Activated B cell treated with CpG ODN at 0.5 μM for 24 hours (primary cell): ENCODE measurements at regions of chr9 and their contacts with region 1.

Region 1: GRCh38 chr9:114291064-114291474 is 31.8 kb upstream of the ORM1 start:
- DNase-seq: peak; percentile 67
- ATAC-seq: peak; percentile 56
- H3K4me3 Mint-ChIP-seq: no peak overlapping the region
- H3K27ac Mint-ChIP-seq: peak overlapping the region; percentile 43
- H3K4me1 Mint-ChIP-seq: peaks cover 2% of the 10 kb centered on the region
- H3K27me3 Mint-ChIP-seq: peaks cover 3% of the 10 kb centered on the region
- CTCF ChIP-seq: peak; percentile 47

Region 2: GRCh38 chr9:114082017-114082762 is 208.9 kb before region 1 on chr9:
- CTCF ChIA-PET with region 1: interaction called, 22 read pairs
- POLR2A ChIA-PET with region 1: no interaction called
- intact Hi-C with region 1: loop called (anchors 1 kb)
- DNase-seq: peak; percentile 57
- ATAC-seq: peak; percentile 71
- H3K4me3 Mint-ChIP-seq: no peak overlapping the region
- H3K27ac Mint-ChIP-seq: no peak overlapping the region
- H3K4me1 Mint-ChIP-seq: no peaks in the 10 kb centered on the region
- H3K27me3 Mint-ChIP-seq: peaks cover under 1% of the 10 kb centered on the region
- CTCF ChIP-seq: peak; percentile 54

Region 3: DNA sequence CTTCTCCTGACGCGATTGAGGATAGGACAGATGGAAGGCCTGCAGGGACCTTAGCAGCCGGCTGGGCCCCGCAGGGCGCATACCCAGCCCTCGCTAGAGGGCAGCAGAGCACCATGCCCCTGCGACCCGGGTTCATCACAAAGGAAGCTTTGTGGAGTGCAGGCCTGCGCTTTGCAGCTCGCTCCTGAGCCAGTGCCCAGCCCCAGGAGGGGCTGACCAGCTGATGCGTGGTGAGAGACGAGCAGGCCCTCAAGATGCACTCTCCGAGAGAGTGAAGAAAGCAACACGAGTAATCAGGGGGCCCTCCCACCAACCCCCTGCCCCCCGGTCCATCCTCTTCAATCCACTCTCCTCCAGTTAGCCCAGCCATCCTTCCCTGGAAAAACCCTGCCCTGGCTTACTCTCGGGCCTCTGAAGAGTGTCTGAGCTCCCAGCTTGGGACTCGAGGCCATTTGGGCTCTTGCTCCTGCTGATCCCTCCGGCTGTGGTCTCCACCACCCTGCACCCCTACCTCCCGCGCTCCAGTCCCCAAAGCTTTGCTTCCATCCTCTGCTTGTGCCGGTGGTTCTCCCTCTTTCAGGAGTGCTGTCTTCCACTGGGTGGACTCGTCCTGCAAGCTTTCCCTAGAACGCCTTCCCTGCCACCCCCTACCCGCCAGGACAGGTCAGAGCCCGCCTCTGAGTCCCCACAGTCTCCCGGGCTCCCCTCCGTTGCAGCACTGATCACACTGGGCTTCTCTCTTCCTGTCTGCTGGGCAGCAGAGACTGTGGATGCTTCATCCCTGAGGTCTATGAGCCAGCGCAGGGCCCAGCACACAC is 182.8 kb before region 1 on chr9:
- CTCF ChIA-PET with region 1: interaction called, 20 read pairs
- POLR2A ChIA-PET with region 1: no interaction called
- intact Hi-C with region 1: loop called (anchors 1 kb)
- DNase-seq: peak; percentile 29
- ATAC-seq: peak; percentile 60
- H3K4me3 Mint-ChIP-seq: no peak overlapping the region
- H3K27ac Mint-ChIP-seq: no peak overlapping the region
- H3K4me1 Mint-ChIP-seq: no peaks in the 10 kb centered on the region
- H3K27me3 Mint-ChIP-seq: peaks cover 8% of the 10 kb centered on the region
- CTCF ChIP-seq: no peak

Region 4: GRCh38 chr9:114155263-114155972 is 135.7 kb before region 1 on chr9 and contains the start of gene COL27A1:
- CTCF ChIA-PET with region 1: interaction called, 5 read pairs
- POLR2A ChIA-PET with region 1: no interaction called
- intact Hi-C with region 1: loop called (anchors 1 kb)
- DNase-seq: peak; percentile 74
- ATAC-seq: peak; percentile 91
- H3K4me3 Mint-ChIP-seq: peak within 1 kb of the TSS; percentile 81
- H3K27ac Mint-ChIP-seq: no peak within 1 kb of the TSS
- H3K4me1 Mint-ChIP-seq: peaks cover 21% of the 10 kb centered on the region
- H3K27me3 Mint-ChIP-seq: peaks cover 54% of the 10 kb centered on the region
- CTCF ChIP-seq: peak; percentile 19
- total RNA-seq, gene COL27A1: 0.33 and 0.44 TPM in 2 replicates